CD4-positive, alpha-beta memory T cell (primary cell): ENCODE measurements at regions of chr12 and their contacts with region 1.

Region 1: GRCh38 chr12:121626087-121626852 is at the start of gene ORAI1:
- DNase-seq: peak; percentile 93 to 98 (median 96)
- H3K4me3 ChIP-seq: peak within 1 kb of the TSS; percentile 88 to 96
- H3K4me3 Mint-ChIP-seq: peak within 1 kb of the TSS; percentile 96 to 98 (median 98)
- H3K27ac ChIP-seq: peak within 1 kb of the TSS; percentile 97
- H3K27ac Mint-ChIP-seq: peak within 1 kb of the TSS; percentile 96 to 100 (median 97)
- H3K4me1 ChIP-seq: peaks cover 46% of the 10 kb centered on the region
- H3K4me1 Mint-ChIP-seq: peaks cover 30 to 59% (median 39%) of the 10 kb centered on the region in 4 donors
- H3K27me3 ChIP-seq: no peaks in the 10 kb centered on the region
- H3K27me3 Mint-ChIP-seq: peaks cover 0 to 2% of the 10 kb centered on the region in 2 donors
- total RNA-seq, gene ORAI1: 48.8 to 51.7 TPM

Region 2: GRCh38 chr12:121499929-121500793 is 126.1 kb before region 1 on chr12:
- CTCF ChIA-PET with region 1: interaction called, 11 read pairs
- POLR2A ChIA-PET with region 1: interaction called, 11 read pairs
- intact Hi-C with region 1: loop called (anchors 1 kb)
- DNase-seq: peak; percentile 62 to 72 (median 71)
- H3K4me3 ChIP-seq: no peak overlapping the region
- H3K4me3 Mint-ChIP-seq: peak overlapping the region in 1 of 8 donors; percentile 11
- H3K27ac ChIP-seq: no peak overlapping the region
- H3K27ac Mint-ChIP-seq: peak overlapping the region in 3 of 7 donors; percentile 17 to 74 (median 63)
- H3K4me1 ChIP-seq: peaks cover 17% of the 10 kb centered on the region
- H3K4me1 Mint-ChIP-seq: peaks cover 8 to 21% (median 15%) of the 10 kb centered on the region in 4 donors
- H3K27me3 ChIP-seq: no peaks in the 10 kb centered on the region
- H3K27me3 Mint-ChIP-seq: no peaks in the 10 kb centered on the region

Region 3: GRCh38 chr12:121543786-121544185 is 82.5 kb before region 1 on chr12:
- CTCF ChIA-PET with region 1: interaction called, 4 read pairs
- POLR2A ChIA-PET with region 1: interaction called, 11 read pairs
- intact Hi-C with region 1: no loop called
- DNase-seq: no peak
- H3K4me3 ChIP-seq: no peak overlapping the region
- H3K4me3 Mint-ChIP-seq: no peak overlapping the region
- H3K27ac ChIP-seq: no peak overlapping the region
- H3K27ac Mint-ChIP-seq: no peak overlapping the region
- H3K4me1 ChIP-seq: peaks cover 4% of the 10 kb centered on the region
- H3K4me1 Mint-ChIP-seq: peaks cover 0 to 18% (median 11%) of the 10 kb centered on the region in 4 donors
- H3K27me3 ChIP-seq: no peaks in the 10 kb centered on the region
- H3K27me3 Mint-ChIP-seq: no peaks in the 10 kb centered on the region

Region 4: DNA sequence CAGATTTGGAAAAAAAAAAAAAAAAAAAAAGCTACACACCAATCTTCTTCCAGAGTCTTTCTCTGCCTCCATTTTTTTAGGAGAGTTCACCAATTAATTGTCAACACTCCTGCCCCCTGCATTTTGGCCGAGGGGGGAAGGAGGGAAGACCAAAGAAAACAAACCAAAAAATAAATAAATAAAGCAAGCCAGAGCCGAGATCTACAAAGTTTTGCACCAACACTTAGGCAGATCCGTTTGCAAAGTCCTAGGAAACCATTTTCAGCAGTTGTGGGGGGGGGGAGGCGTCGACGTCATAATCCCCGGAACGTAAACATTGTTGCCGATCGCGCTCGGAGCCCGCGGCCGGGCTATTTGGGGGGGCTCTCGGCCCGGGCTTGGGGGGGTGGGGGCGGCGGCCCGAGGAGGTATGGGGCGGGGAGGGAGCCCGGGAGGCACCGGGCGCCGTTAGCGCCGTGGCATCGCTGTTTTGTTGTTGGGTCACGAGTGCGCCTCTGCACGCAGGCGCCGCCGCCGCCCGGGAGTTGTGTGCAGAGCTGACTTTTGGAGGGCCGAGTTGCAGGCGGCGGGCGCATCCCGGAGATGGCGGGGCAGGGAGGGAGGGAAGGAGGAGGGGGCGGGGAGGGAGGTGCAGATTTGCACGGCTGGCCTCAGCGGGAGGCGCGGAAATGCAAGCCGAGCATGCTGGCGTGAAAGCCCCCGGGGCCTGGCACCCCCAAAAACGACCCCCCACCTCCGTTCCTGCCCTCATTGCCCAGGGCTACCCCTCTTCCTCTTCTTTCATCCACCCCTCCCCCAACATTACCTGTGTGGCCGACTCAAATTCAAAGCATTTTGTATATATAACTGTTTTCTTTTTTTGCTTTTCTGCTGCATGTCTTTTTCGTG is 46.0 kb before region 1 on chr12:
- CTCF ChIA-PET with region 1: interaction called, 107 read pairs
- POLR2A ChIA-PET with region 1: interaction called, 216 read pairs
- intact Hi-C with region 1: loop called (anchors 1 kb)
- DNase-seq: peak; percentile 74 to 86 (median 77)
- H3K4me3 ChIP-seq: peak overlapping the region; percentile 63 to 87
- H3K4me3 Mint-ChIP-seq: peak overlapping the region; percentile 95 to 99 (median 98)
- H3K27ac ChIP-seq: peak overlapping the region; percentile 71
- H3K27ac Mint-ChIP-seq: peak overlapping the region; percentile 92 to 99 (median 98)
- H3K4me1 ChIP-seq: peaks cover 53% of the 10 kb centered on the region
- H3K4me1 Mint-ChIP-seq: peaks cover 21 to 65% (median 44%) of the 10 kb centered on the region in 4 donors
- H3K27me3 ChIP-seq: no peaks in the 10 kb centered on the region
- H3K27me3 Mint-ChIP-seq: no peaks in the 10 kb centered on the region

Region 5: DNA sequence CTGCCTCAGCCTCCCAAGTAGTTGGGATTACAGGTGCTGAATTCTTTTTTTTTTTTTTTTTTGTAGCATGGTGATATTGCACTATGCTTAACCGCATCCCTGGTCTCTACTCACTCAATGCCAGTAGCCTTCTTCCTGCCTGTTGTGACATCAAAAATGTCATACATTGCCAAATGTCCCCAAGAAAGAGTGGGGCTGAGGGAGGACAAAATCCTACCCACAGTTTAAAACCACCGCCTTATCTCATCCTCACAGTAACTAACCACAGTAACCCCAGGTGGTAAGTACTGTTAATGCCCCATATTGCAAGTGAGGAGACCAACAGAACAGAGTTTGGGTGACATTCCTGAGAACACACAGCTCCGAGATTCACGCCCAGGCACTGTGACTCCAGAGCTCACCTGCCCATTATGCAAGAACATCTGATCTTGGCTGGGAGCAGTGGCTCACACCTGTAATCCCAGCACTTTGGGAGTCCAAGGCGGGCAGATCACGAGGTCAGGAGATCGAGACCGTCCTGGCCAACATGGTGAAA is 23.6 kb after region 1 on chr12:
- CTCF ChIA-PET with region 1: interaction called, 9 read pairs
- POLR2A ChIA-PET with region 1: interaction called, 15 read pairs
- intact Hi-C with region 1: no loop called
- DNase-seq: peak; percentile 47 to 65 (median 54)
- H3K4me3 ChIP-seq: no peak overlapping the region
- H3K4me3 Mint-ChIP-seq: peak overlapping the region in 7 of 8 donors; percentile 6 to 79 (median 53)
- H3K27ac ChIP-seq: peak overlapping the region; percentile 10
- H3K27ac Mint-ChIP-seq: peak overlapping the region; percentile 79 to 95 (median 87)
- H3K4me1 ChIP-seq: peaks cover 21% of the 10 kb centered on the region
- H3K4me1 Mint-ChIP-seq: peaks cover 20 to 39% (median 29%) of the 10 kb centered on the region in 4 donors
- H3K27me3 ChIP-seq: no peaks in the 10 kb centered on the region
- H3K27me3 Mint-ChIP-seq: no peaks in the 10 kb centered on the region

Region 6: DNA sequence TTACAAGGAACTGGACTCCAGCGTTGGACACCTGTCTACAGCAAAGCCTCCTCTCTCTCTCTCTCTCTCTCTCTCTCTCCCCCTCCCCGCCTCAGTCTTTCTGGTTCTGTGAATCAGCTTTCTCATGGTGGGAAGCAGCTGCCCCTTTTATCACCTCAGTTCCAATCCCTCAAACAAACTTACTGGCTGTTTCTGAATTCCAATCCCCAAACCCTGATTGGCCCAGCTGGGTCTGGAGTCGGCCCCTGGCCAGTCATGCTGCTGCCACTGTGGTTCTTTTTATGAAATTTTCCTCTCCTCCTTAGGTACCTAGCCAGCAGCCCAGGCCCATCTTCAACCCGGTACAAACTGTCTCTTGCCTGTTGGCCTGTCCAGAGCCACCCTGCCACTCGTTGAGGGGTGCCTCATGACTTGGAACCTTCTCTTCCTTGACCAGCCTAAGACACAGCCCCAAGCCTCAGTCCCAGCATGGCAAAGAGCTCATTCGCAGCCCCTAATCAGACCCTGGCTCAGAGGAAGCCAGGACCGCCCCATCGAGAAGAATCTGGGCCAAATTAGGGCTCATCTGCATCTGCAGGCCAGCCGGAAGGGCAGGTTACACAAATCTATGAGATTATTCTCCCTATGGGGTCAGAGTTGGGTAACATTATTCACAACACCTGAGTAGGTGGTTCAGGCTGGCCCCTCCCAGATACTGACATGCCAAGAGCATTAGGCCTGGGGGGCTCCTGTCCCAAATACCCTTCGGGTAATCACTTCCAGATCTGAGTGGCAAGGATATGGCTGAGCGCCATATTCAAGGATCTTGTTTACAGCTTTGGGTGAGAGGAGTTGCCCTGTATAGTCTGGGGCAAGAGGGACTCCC is 52.7 kb after region 1 on chr12:
- CTCF ChIA-PET with region 1: interaction called, 64 read pairs
- POLR2A ChIA-PET with region 1: interaction called, 17 read pairs
- intact Hi-C with region 1: loop called (anchors 1 kb)
- DNase-seq: no peak
- H3K4me3 ChIP-seq: no peak overlapping the region
- H3K4me3 Mint-ChIP-seq: no peak overlapping the region
- H3K27ac ChIP-seq: no peak overlapping the region
- H3K27ac Mint-ChIP-seq: peak overlapping the region in 4 of 7 donors; percentile 18 to 70 (median 50)
- H3K4me1 ChIP-seq: peaks cover 3% of the 10 kb centered on the region
- H3K4me1 Mint-ChIP-seq: peaks cover 4 to 10% (median 5%) of the 10 kb centered on the region in 4 donors
- H3K27me3 ChIP-seq: no peaks in the 10 kb centered on the region
- H3K27me3 Mint-ChIP-seq: no peaks in the 10 kb centered on the region

Region 7: DNA sequence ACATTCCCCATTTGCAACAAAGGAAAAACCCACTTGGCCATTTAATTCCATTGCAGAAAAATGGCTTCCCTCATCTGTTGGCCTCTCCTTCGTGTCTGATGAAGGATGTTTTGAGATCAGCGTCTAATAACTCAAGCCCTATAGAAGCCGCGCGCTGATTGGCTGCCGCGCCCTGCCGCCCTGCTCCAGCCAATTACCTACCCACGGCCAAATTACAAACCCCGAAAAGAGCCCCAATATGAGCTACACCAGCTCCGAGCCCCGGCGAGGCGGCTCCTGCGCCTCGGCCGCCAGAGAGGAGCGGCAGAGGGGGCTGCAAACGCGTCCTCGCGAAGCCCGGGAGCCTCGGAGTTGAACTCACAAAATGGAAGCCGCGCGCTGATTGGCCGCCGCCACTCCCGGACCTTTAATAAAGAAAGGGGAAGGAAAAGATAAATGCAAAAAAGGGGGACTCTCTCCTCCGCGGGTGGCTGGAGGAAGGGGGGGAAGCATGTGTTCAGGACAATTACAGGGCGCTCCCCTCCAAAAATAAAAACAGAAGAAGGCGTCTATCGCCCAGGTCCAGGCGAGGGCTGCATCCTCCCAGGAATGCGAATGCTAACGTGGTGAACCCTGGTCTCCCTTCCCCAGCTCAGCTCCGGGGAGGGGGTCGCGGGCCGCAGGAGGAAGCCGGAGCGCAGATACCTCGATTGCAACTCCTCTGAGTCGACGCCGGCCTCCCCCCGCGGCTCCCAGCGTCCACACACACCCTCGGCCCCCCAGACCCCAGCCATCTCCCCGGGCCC is 176.8 kb after region 1 on chr12:
- CTCF ChIA-PET with region 1: interaction called, 4 read pairs
- POLR2A ChIA-PET with region 1: interaction called, 13 read pairs
- intact Hi-C with region 1: no loop called
- DNase-seq: peak; percentile 90 to 93 (median 91)
- H3K4me3 ChIP-seq: peak overlapping the region; percentile 98
- H3K4me3 Mint-ChIP-seq: peak overlapping the region; percentile 92 to 99 (median 98)
- H3K27ac ChIP-seq: peak overlapping the region; percentile 91
- H3K27ac Mint-ChIP-seq: peak overlapping the region; percentile 98 to 99 (median 99)
- H3K4me1 ChIP-seq: peaks cover 37% of the 10 kb centered on the region
- H3K4me1 Mint-ChIP-seq: peaks cover 21 to 60% (median 35%) of the 10 kb centered on the region in 4 donors
- H3K27me3 ChIP-seq: no peaks in the 10 kb centered on the region
- H3K27me3 Mint-ChIP-seq: no peaks in the 10 kb centered on the region